CD8-positive, alpha-beta T cell (primary cell): ENCODE measurements at regions of chr17 and their contacts with region 1.

Region 1: GRCh38 chr17:28318759-28319660 is at the start of gene TMEM97:
- DNase-seq: peak; percentile 86 to 98 (median 93)
- ATAC-seq: peak; percentile 98
- H3K4me3 ChIP-seq: peak within 1 kb of the TSS; percentile 82
- H3K4me3 Mint-ChIP-seq: peak within 1 kb of the TSS; percentile 84
- H3K27ac ChIP-seq: peak within 1 kb of the TSS; percentile 46 to 52
- H3K27ac Mint-ChIP-seq: peak within 1 kb of the TSS; percentile 49
- H3K4me1 ChIP-seq: peaks cover 19% of the 10 kb centered on the region
- H3K4me1 Mint-ChIP-seq: peaks cover 19% of the 10 kb centered on the region
- H3K27me3 ChIP-seq: no peaks in the 10 kb centered on the region
- H3K27me3 Mint-ChIP-seq: no peaks in the 10 kb centered on the region
- CTCF ChIP-seq: no peak
- total RNA-seq, gene TMEM97: 3.7 to 4.6 TPM

Region 2: GRCh38 chr17:27332485-27333409 is 986.3 kb before region 1 on chr17:
- CTCF ChIA-PET with region 1: no interaction called
- POLR2A ChIA-PET with region 1: no interaction called
- intact Hi-C with region 1: no loop called
- DNase-seq: peak; percentile 76 to 93 (median 91)
- ATAC-seq: peak; percentile 80
- H3K4me3 ChIP-seq: peak overlapping the region; percentile 52 to 58
- H3K4me3 Mint-ChIP-seq: peak overlapping the region; percentile 79
- H3K27ac ChIP-seq: peak overlapping the region; percentile 21 to 84
- H3K27ac Mint-ChIP-seq: peak overlapping the region; percentile 88
- H3K4me1 ChIP-seq: peaks cover 13% of the 10 kb centered on the region
- H3K4me1 Mint-ChIP-seq: peaks cover 16% of the 10 kb centered on the region
- H3K27me3 ChIP-seq: no peaks in the 10 kb centered on the region
- H3K27me3 Mint-ChIP-seq: no peaks in the 10 kb centered on the region
- CTCF ChIP-seq: peak; percentile 54

Region 3: DNA sequence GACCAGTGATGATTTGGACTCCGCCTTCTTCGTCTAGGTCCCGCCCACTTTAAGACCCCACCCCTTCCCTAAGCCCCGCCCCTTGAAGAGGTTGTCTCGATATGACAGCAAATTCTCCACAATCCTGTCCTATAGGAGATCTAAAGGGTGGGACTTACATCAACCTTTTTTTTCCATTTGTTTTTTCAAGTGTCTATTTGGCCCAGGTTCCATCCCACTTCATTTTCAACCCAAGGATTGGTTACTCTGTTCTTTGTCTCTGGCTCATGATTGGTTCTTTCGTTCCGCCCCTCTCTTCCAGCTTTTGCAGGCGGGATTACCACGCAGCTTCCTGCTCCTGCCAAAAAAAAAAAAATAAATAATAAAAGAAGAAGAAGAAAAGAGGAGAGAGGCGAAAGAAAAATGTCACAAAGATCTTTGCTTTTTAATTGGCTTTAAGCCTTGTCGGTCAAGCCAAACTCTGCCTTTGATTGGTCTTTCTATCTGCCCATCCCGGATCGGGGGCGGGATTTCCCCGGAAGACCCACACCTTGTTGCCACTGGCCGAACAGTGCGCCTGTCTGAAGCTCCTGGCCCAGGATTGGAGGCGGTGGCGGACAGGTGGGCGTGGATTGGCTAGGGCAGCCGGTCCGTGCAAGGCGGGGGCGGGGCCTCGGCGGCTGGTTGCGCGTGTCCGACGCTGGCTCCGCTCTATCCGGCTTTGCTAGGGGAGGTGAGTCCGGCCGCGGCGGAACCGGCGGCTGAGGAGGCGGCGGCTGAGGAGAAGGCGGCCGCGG is 277.8 kb before region 1 on chr17:
- CTCF ChIA-PET with region 1: no interaction called
- POLR2A ChIA-PET with region 1: no interaction called
- intact Hi-C with region 1: loop called (anchors 2 to 5 kb)
- DNase-seq: peak; percentile 97 to 100 (median 99)
- ATAC-seq: peak; percentile 91
- H3K4me3 ChIP-seq: peak overlapping the region; percentile 62 to 76
- H3K4me3 Mint-ChIP-seq: peak overlapping the region; percentile 87
- H3K27ac ChIP-seq: peak overlapping the region; percentile 24 to 77
- H3K27ac Mint-ChIP-seq: peak overlapping the region; percentile 89
- H3K4me1 ChIP-seq: peaks cover 27% of the 10 kb centered on the region
- H3K4me1 Mint-ChIP-seq: peaks cover 53% of the 10 kb centered on the region
- H3K27me3 ChIP-seq: no peaks in the 10 kb centered on the region
- H3K27me3 Mint-ChIP-seq: no peaks in the 10 kb centered on the region
- CTCF ChIP-seq: no peak

Region 4: DNA sequence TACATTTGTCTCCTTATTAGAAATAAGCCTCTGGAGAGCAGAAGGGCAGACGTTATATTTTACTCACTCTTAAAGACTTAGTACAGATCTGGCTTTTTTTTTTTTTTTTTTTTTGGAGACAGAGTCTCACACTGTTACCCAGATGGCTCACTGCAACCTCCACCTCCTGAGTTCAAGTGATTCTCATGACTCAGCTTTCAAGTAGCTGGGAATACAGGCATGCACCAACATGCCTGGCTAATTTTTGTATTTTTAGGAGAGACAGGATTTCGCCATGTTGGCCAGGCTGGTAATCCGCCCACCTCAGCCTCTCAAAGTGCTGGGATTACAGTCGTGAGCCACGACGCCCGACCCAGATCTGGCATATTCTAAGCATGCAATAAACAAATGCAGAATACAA is 36.4 kb before region 1 on chr17:
- CTCF ChIA-PET with region 1: no interaction called
- POLR2A ChIA-PET with region 1: no interaction called
- intact Hi-C with region 1: loop called in 1 of 2 experiments (anchors 1 kb)
- DNase-seq: peak in 1 of 9 experiments; percentile 4
- ATAC-seq: no peak
- H3K4me3 ChIP-seq: no peak overlapping the region
- H3K4me3 Mint-ChIP-seq: no peak overlapping the region
- H3K27ac ChIP-seq: no peak overlapping the region
- H3K27ac Mint-ChIP-seq: no peak overlapping the region
- H3K4me1 ChIP-seq: peaks cover 12% of the 10 kb centered on the region
- H3K4me1 Mint-ChIP-seq: peaks cover 10% of the 10 kb centered on the region
- H3K27me3 ChIP-seq: peaks cover 0 to 3% of the 10 kb centered on the region in 2 experiments
- H3K27me3 Mint-ChIP-seq: peaks cover 4% of the 10 kb centered on the region
- CTCF ChIP-seq: no peak

Region 5: DNA sequence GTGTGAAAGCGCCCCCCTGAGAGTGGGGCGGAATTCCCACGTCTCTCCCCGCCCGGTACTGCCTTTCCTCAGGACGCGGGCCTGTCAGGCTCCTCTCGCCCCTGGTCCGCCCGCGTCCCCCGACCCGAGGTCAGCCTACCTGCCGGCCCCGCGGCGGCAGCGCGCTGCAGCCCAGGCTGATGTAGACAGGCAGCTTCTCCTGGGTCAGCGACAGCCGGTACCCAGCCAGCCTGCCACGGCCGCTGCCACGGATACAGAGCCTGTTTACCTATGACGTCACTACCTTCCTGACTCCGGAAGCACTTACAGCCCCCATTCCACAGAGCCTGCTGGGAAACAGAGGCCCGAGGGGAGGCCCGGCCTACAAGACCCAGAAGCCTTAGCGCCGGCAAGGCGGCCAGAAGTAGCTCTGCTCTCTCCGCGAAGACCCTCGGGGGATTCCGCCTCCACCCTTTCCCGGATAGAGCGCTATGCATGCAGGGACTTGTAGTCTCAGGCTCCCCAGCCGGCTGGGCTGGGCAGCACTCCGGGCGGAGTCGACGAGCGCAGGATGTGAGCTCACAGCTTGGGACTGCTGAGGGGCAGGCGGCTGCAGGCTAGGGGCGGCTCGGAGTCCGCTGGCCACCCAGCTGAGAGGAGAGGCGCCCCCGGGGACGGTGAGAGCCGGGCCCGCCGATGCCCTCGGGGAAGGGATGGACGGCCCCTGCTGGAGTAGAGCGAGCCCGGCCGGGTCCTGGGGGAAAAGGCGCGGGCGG is 16.4 kb after region 1 on chr17 and contains the starts of genes IFT20 and TNFAIP1:
- CTCF ChIA-PET with region 1: interaction called, 4 read pairs
- POLR2A ChIA-PET with region 1: interaction called, 10 read pairs
- intact Hi-C with region 1: loop called (anchors 1 kb)
- DNase-seq: peak; percentile 94 to 100 (median 97)
- ATAC-seq: peak; percentile 96
- H3K4me3 ChIP-seq: peak within 1 kb of the TSS; percentile 80 to 95
- H3K4me3 Mint-ChIP-seq: peak within 1 kb of the TSS; percentile 99
- H3K27ac ChIP-seq: peak within 1 kb of the TSS; percentile 92 to 97
- H3K27ac Mint-ChIP-seq: peak within 1 kb of the TSS; percentile 97
- H3K4me1 ChIP-seq: peaks cover 22% of the 10 kb centered on the region
- H3K4me1 Mint-ChIP-seq: peaks cover 41% of the 10 kb centered on the region
- H3K27me3 ChIP-seq: no peaks in the 10 kb centered on the region
- H3K27me3 Mint-ChIP-seq: no peaks in the 10 kb centered on the region
- CTCF ChIP-seq: no peak
- total RNA-seq, gene IFT20: 32.5 to 34.6 TPM
- total RNA-seq, gene TNFAIP1: 15.3 to 15.5 TPM

Region 6: GRCh38 chr17:28357061-28357900 is 38.3 kb after region 1 on chr17 and contains the start of gene POLDIP2:
- CTCF ChIA-PET with region 1: interaction called, 3 read pairs
- POLR2A ChIA-PET with region 1: interaction called, 9 read pairs
- intact Hi-C with region 1: loop called (anchors 1 kb)
- DNase-seq: peak; percentile 91 to 97 (median 96)
- ATAC-seq: peak; percentile 98
- H3K4me3 ChIP-seq: peak within 1 kb of the TSS; percentile 92 to 94
- H3K4me3 Mint-ChIP-seq: peak within 1 kb of the TSS; percentile 94
- H3K27ac ChIP-seq: peak within 1 kb of the TSS; percentile 82 to 93
- H3K27ac Mint-ChIP-seq: peak within 1 kb of the TSS; percentile 96
- H3K4me1 ChIP-seq: peaks cover 25% of the 10 kb centered on the region
- H3K4me1 Mint-ChIP-seq: peaks cover 30% of the 10 kb centered on the region
- H3K27me3 ChIP-seq: no peaks in the 10 kb centered on the region
- H3K27me3 Mint-ChIP-seq: no peaks in the 10 kb centered on the region
- CTCF ChIP-seq: no peak
- total RNA-seq, gene POLDIP2: 26.8 to 27.5 TPM

Region 7: GRCh38 chr17:28384281-28385036 is 65.4 kb after region 1 on chr17:
- CTCF ChIA-PET with region 1: no interaction called
- POLR2A ChIA-PET with region 1: no interaction called
- intact Hi-C with region 1: loop called in 1 of 2 experiments (anchors 1 kb)
- DNase-seq: peak; percentile 21 to 77 (median 65)
- ATAC-seq: peak; percentile 93
- H3K4me3 ChIP-seq: peak overlapping the region; percentile 75 to 83
- H3K4me3 Mint-ChIP-seq: peak overlapping the region; percentile 92
- H3K27ac ChIP-seq: peak overlapping the region; percentile 7 to 46
- H3K27ac Mint-ChIP-seq: peak overlapping the region; percentile 52
- H3K4me1 ChIP-seq: peaks cover 25% of the 10 kb centered on the region
- H3K4me1 Mint-ChIP-seq: peaks cover 27% of the 10 kb centered on the region
- H3K27me3 ChIP-seq: no peaks in the 10 kb centered on the region
- H3K27me3 Mint-ChIP-seq: peaks cover 6% of the 10 kb centered on the region
- CTCF ChIP-seq: no peak